ENCODE measurements at regions of chr4 and their contacts with region 1.

Region 1: GRCh38 chr4:77385124-77385969 is 220.3 kb upstream of the CXCL13 start:
- DNase-seq: peak; percentile 77
- H3K4me3 Mint-ChIP-seq: no peak overlapping the region
- H3K27ac Mint-ChIP-seq: no peak overlapping the region
- H3K4me1 Mint-ChIP-seq: no peaks in the 10 kb centered on the region
- H3K27me3 Mint-ChIP-seq: peaks cover 11% of the 10 kb centered on the region
- CTCF ChIP-seq: peak; percentile 74

Region 2: DNA sequence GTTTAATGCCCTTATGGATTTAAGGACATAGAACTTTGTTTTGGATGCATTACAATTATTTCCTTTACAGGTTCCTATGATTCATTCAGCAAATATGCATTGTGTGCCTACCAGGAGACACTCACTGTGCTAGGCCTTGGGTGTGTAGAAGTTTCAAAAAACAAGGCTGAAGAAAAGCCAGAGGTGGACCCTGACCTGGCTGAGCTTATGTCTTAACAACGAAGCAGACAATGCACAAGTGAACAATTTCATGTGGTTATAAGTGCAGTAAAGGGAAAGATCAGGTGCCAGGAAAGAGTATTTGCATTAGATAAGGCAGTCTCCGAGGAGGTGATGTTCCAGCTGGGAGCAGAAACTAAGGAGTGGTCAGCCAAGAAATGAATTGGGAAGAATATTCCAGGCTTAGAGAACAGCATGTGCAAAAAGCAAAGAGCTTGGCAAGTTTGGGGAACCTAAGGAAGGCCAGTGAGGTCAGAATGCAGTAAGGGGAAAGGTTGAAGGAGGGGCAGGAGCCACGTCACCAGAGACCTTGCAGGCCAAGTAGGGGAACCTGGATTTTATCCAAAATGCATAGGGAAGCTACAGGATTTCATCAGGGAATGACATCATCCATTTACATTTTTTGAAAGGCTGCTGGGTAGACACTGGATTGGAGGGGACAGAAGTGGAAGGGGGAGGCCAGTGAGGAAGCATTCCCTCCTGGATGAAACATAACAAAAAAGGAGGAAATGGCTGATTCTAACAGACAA is 681.0 kb before region 1 on chr4:
- CTCF ChIA-PET with region 1: no interaction called
- POLR2A ChIA-PET with region 1: no interaction called
- intact Hi-C with region 1: no loop called
- DNase-seq: peak; percentile 90
- H3K4me3 Mint-ChIP-seq: peak overlapping the region; percentile 24
- H3K27ac Mint-ChIP-seq: peak overlapping the region; percentile 82
- H3K4me1 Mint-ChIP-seq: peaks cover 55% of the 10 kb centered on the region
- H3K27me3 Mint-ChIP-seq: no peaks in the 10 kb centered on the region
- CTCF ChIP-seq: no peak

Region 3: GRCh38 chr4:77308843-77309242 is 76.5 kb before region 1 on chr4:
- CTCF ChIA-PET with region 1: no interaction called
- POLR2A ChIA-PET with region 1: no interaction called
- intact Hi-C with region 1: no loop called
- DNase-seq: peak; percentile 62
- H3K4me3 Mint-ChIP-seq: no peak overlapping the region
- H3K27ac Mint-ChIP-seq: no peak overlapping the region
- H3K4me1 Mint-ChIP-seq: peaks cover 7% of the 10 kb centered on the region
- H3K27me3 Mint-ChIP-seq: no peaks in the 10 kb centered on the region
- CTCF ChIP-seq: peak; percentile 52

Region 4: GRCh38 chr4:77367638-77368037 is 17.7 kb before region 1 on chr4:
- CTCF ChIA-PET with region 1: interaction called, 15 read pairs
- POLR2A ChIA-PET with region 1: interaction called, 3 read pairs
- intact Hi-C with region 1: no loop called
- DNase-seq: no peak
- H3K4me3 Mint-ChIP-seq: no peak overlapping the region
- H3K27ac Mint-ChIP-seq: no peak overlapping the region
- H3K4me1 Mint-ChIP-seq: no peaks in the 10 kb centered on the region
- H3K27me3 Mint-ChIP-seq: no peaks in the 10 kb centered on the region
- CTCF ChIP-seq: no peak

Region 5: DNA sequence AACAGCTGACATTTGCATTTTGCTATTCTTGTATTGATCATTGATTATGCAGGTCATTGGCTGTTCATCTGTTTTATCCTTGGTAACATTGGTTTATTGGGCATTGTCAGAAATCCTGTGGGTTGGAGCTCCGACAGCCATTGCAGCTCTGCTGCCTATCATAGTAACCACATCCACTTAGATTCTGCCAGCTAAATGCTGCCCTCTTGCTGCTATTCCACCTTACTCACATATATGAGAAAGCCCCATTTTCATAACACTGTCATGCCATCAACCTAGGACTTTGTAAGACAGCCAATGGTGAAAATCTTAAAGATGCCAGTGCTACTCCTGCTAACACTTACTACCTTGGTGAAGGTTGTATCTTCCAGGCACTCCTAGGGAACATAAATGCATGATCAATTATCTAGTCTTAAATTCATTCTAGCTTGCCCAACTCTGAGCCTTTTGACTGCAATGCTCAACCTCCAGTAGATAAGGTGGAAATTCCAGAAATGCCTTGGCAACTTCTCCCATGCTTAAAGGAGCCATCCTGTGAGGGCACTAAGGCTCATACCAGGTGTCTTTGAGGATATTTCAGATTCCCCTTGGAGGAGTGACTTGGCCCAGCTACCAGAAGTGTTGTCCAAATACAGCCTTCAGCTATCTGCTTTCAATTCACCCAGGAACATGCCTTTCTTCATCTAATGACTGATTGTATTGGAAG is 33.1 kb after region 1 on chr4:
- CTCF ChIA-PET with region 1: interaction called, 11 read pairs
- POLR2A ChIA-PET with region 1: no interaction called
- intact Hi-C with region 1: no loop called
- DNase-seq: peak; percentile 34
- H3K4me3 Mint-ChIP-seq: no peak overlapping the region
- H3K27ac Mint-ChIP-seq: no peak overlapping the region
- H3K4me1 Mint-ChIP-seq: no peaks in the 10 kb centered on the region
- H3K27me3 Mint-ChIP-seq: peaks cover 28% of the 10 kb centered on the region
- CTCF ChIP-seq: peak; percentile 19

Region 6: GRCh38 chr4:77465271-77465670 is 79.9 kb after region 1 on chr4:
- CTCF ChIA-PET with region 1: interaction called, 16 read pairs
- POLR2A ChIA-PET with region 1: no interaction called
- intact Hi-C with region 1: no loop called
- DNase-seq: peak; percentile 45
- H3K4me3 Mint-ChIP-seq: no peak overlapping the region
- H3K27ac Mint-ChIP-seq: no peak overlapping the region
- H3K4me1 Mint-ChIP-seq: no peaks in the 10 kb centered on the region
- H3K27me3 Mint-ChIP-seq: no peaks in the 10 kb centered on the region
- CTCF ChIP-seq: peak; percentile 61

Region 7: DNA sequence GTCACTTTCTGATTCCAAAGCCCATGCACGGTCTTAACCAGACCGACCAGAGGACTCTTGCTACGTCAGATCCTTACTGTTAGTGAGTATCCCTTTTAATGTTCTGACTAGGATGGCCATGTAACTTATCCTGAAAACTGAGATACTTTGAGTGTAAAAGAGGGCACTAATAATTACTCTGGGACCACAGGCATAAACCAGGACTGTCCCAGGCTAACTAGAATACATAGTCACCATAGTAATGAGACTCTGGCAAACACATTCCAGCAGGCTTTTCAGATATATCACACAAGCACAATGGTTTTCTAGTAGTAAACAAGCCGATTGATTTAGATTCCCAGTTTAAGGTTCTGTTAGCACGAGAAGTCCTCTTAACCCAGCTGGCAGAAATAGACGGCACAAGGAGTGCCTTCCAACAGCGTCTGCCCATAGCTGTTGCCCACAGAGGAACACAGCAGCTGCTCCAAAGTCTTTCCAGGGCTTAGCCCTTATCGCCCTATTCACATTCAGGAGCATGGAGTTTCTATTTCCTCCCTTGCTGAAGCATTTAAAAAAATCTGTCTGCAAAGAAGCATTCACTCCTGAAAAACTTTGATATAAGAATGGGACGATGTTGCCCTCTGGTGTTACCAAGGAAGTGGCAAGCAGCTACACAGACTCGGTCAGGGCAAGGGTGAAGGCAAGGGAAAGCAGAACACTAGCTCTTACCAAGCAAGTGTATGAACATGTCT is 312.7 kb after region 1 on chr4:
- CTCF ChIA-PET with region 1: interaction called, 23 read pairs
- POLR2A ChIA-PET with region 1: no interaction called
- intact Hi-C with region 1: loop called (anchors 1 kb)
- DNase-seq: peak; percentile 73
- H3K4me3 Mint-ChIP-seq: no peak overlapping the region
- H3K27ac Mint-ChIP-seq: no peak overlapping the region
- H3K4me1 Mint-ChIP-seq: peaks cover 23% of the 10 kb centered on the region
- H3K27me3 Mint-ChIP-seq: no peaks in the 10 kb centered on the region
- CTCF ChIP-seq: peak; percentile 65